ENCODE measurements at regions of chr1 and their contacts with region 1.

Region 1: GRCh38 chr1:182391362-182392044 is at the start of gene GLUL:
- DNase-seq: peak; percentile 67
- H3K4me3 Mint-ChIP-seq: peak within 1 kb of the TSS; percentile 95
- H3K27ac Mint-ChIP-seq: peak within 1 kb of the TSS; percentile 88
- H3K4me1 Mint-ChIP-seq: peaks cover 33% of the 10 kb centered on the region
- H3K27me3 Mint-ChIP-seq: peaks cover 33% of the 10 kb centered on the region
- total RNA-seq, gene GLUL: 34.9 and 41.0 TPM in 2 replicates

Region 2: GRCh38 chr1:181479137-181479745 is 912.3 kb before region 1 on chr1:
- intact Hi-C with region 1: loop called (anchors 10 kb)
- DNase-seq: no peak
- H3K4me3 Mint-ChIP-seq: no peak overlapping the region
- H3K27ac Mint-ChIP-seq: no peak overlapping the region
- H3K4me1 Mint-ChIP-seq: peaks cover 7% of the 10 kb centered on the region
- H3K27me3 Mint-ChIP-seq: peaks cover 47% of the 10 kb centered on the region

Region 3: GRCh38 chr1:182029379-182030331 is 361.8 kb before region 1 on chr1:
- intact Hi-C with region 1: loop called (anchors 5 kb)
- DNase-seq: peak; percentile 98
- H3K4me3 Mint-ChIP-seq: peak overlapping the region; percentile 97
- H3K27ac Mint-ChIP-seq: peak overlapping the region; percentile 95
- H3K4me1 Mint-ChIP-seq: peaks cover 14% of the 10 kb centered on the region
- H3K27me3 Mint-ChIP-seq: peaks cover 2% of the 10 kb centered on the region

Region 4: DNA sequence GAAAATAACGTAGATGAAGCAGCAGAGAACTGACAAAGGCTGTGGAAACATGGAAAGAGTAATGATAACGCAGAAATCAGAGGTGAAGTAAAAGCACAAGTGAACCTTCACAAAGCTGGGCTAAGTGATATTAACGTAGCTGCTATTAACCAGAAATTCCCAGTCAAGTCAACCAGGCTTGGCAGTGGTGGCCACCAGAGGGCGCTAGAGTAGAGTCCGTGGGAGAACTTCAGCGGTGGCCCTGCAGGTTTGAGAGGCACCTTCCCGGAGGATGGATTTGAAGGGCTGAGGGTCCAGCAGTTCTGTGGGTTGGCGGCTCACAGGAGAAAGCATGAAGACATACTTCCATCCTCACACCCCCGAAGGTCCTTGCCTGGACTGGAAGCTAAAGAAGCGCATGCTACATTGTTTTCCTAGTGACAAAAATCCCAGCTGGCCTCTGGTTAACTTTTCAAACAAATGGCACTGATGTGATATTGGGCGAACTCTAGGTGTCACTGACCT is 248.3 kb before region 1 on chr1:
- intact Hi-C with region 1: loop called (anchors 1 kb)
- DNase-seq: peak; percentile 71
- H3K4me3 Mint-ChIP-seq: no peak overlapping the region
- H3K27ac Mint-ChIP-seq: no peak overlapping the region
- H3K4me1 Mint-ChIP-seq: peaks cover 12% of the 10 kb centered on the region
- H3K27me3 Mint-ChIP-seq: peaks cover 6% of the 10 kb centered on the region

Region 5: GRCh38 chr1:182259229-182259872 is 132.2 kb before region 1 on chr1:
- intact Hi-C with region 1: loop called (anchors 5 kb)
- DNase-seq: peak; percentile 48
- H3K4me3 Mint-ChIP-seq: peak overlapping the region; percentile 24
- H3K27ac Mint-ChIP-seq: peak overlapping the region; percentile 92
- H3K4me1 Mint-ChIP-seq: peaks cover 24% of the 10 kb centered on the region
- H3K27me3 Mint-ChIP-seq: no peaks in the 10 kb centered on the region

Region 6: DNA sequence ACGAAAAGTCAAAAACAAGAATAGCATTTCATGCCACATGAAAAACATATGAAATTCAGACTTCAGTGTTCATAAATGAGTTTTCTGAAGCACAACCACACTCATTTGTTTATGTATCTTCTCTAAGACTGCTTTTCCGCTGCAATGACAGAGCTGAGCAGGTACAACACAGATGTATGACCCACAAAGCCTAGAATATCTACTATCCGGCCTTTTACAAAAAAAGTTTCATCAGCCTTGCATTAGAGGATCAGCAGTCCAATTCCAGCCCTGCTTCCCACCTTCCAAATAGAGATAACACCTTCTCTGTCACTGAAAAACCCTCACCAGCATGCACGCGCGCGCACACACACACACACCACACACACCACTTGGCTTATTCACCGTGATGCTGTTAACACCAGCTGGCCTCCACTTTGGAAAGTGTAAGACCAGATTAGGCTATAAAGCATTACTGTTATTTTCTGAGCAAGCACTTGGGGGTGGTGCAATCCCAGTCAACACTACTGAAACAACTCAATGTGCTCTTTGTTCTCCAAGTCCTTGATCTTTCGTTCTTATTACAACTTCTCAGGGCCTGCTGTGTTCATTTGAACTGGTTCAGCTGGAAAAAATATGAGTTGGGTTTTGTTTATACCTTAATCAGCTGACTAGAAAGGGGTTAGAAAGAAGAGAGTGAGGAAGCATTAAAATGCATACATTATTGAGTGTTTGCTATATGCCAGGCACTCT is 89.9 kb before region 1 on chr1:
- intact Hi-C with region 1: loop called (anchors 5 kb)
- DNase-seq: no peak
- H3K4me3 Mint-ChIP-seq: no peak overlapping the region
- H3K27ac Mint-ChIP-seq: peak overlapping the region; percentile 33
- H3K4me1 Mint-ChIP-seq: peaks cover 26% of the 10 kb centered on the region
- H3K27me3 Mint-ChIP-seq: no peaks in the 10 kb centered on the region

Region 7: DNA sequence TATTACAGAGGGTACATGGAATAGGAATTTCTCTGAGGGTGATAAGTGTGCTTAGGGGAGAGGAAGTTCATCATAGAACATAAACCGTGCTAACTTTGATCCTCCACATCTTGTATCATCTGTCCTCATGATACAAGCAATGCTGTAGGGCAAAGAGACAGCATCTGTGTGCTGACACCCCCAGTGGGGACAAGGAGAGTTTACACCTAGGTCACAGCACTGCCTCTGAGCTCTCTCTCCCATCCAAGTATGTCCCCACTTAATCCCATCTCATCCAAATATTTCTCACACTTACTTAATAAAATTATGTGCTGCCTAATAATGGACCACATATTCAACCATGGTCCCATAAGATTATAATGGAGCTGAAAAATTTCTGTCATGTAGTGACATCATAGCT is 13.3 kb after region 1 on chr1:
- intact Hi-C with region 1: no loop called
- DNase-seq: no peak
- H3K4me3 Mint-ChIP-seq: no peak overlapping the region
- H3K27ac Mint-ChIP-seq: no peak overlapping the region
- H3K4me1 Mint-ChIP-seq: no peaks in the 10 kb centered on the region
- H3K27me3 Mint-ChIP-seq: peaks cover 31% of the 10 kb centered on the region